ENCODE measurements at regions of chr5 and their contacts with region 1.

Region 1: GRCh38 chr5:39217365-39218281 is 1.7 kb downstream of the FYB1 start:
- DNase-seq: peak; percentile 90
- ATAC-seq: peak; percentile 71
- H3K4me3 Mint-ChIP-seq: peak overlapping the region; percentile 81
- H3K27ac Mint-ChIP-seq: peak overlapping the region; percentile 95
- H3K4me1 Mint-ChIP-seq: peaks cover 62% of the 10 kb centered on the region
- H3K27me3 Mint-ChIP-seq: no peaks in the 10 kb centered on the region
- CTCF ChIP-seq: peak; percentile 91

Region 2: DNA sequence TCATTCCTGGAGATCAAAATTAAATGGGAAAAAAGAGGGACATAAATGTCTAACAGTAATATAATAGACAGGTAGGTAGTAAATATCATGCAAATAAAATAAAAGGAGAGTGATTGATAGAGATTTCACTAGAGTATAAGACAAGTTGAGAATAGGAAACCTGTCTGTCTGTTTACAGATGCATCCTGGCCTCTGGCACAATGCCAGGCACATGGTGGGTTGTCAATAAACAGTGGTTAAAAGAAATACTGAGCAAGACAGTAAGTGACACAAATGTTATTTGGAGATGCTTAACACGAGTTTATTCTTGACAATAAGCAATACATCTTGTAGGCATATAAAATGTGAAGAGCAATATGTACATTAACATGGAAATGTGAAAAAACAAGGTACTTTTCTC is 176.7 kb before region 1 on chr5:
- CTCF ChIA-PET with region 1: no interaction called
- POLR2A ChIA-PET with region 1: no interaction called
- intact Hi-C with region 1: no loop called
- DNase-seq: peak; percentile 11
- ATAC-seq: no peak
- H3K4me3 Mint-ChIP-seq: no peak overlapping the region
- H3K27ac Mint-ChIP-seq: no peak overlapping the region
- H3K4me1 Mint-ChIP-seq: peaks cover 26% of the 10 kb centered on the region
- H3K27me3 Mint-ChIP-seq: no peaks in the 10 kb centered on the region
- CTCF ChIP-seq: no peak

Region 3: DNA sequence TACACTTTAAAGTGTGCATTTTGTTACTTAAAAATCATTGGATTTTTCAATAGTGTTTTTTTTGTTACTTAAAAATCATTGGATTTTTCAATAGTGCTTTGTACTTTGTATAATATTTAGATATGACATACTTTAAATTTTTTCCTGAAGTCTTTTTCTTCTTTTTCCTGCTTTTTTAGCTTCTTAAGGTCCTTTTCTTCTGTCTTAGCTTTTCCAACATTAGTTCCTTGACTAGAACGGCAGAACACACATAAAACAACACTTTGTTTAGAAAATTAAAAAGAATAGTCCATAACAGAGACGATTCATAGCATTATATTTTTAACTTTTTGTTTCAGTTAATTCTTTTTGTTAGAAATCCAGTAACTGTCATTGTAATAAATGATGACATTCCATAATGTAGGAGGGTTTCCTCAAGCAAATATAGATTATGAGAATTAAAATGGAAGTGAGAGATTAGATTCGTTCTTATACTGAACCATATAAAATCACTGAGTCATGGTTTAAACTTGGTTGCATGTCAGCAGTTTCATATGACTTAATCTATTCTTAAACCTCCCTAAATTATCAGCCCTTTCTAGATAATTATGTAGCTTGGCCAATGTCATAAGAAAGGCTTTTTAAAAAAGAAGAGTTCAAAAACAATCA is 98.1 kb before region 1 on chr5:
- CTCF ChIA-PET with region 1: interaction called, 12 read pairs
- POLR2A ChIA-PET with region 1: interaction called, 3 read pairs
- intact Hi-C with region 1: no loop called
- DNase-seq: no peak
- ATAC-seq: no peak
- H3K4me3 Mint-ChIP-seq: no peak overlapping the region
- H3K27ac Mint-ChIP-seq: peak overlapping the region; percentile 30
- H3K4me1 Mint-ChIP-seq: peaks cover 55% of the 10 kb centered on the region
- H3K27me3 Mint-ChIP-seq: no peaks in the 10 kb centered on the region
- CTCF ChIP-seq: no peak

Region 4: DNA sequence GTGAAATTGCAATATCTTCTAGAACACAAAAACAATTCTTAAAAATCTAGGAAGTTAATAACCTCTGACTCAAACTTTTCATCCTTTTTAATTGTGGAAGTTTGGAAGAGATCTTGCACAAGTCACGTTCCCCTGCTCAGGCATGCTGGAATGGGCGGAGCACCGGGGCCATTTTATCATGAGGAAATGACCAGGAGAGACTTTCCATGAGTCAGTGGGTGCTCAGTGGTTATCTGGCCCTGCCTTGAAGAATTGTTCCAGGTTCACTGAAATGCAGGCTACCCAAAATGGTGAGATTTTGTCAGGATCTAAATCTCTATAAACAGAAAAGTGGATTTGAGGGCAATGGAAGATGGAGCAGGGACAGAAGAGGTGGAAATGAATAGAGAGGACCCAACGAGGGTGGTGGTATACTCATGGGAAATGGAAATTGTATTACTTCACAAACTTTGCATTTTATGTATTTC is 59.5 kb before region 1 on chr5:
- CTCF ChIA-PET with region 1: interaction called, 31 read pairs
- POLR2A ChIA-PET with region 1: interaction called, 3 read pairs
- intact Hi-C with region 1: no loop called
- DNase-seq: no peak
- ATAC-seq: no peak
- H3K4me3 Mint-ChIP-seq: peak overlapping the region; percentile 24
- H3K27ac Mint-ChIP-seq: peak overlapping the region; percentile 66
- H3K4me1 Mint-ChIP-seq: peaks cover 80% of the 10 kb centered on the region
- H3K27me3 Mint-ChIP-seq: no peaks in the 10 kb centered on the region
- CTCF ChIP-seq: no peak

Region 5: GRCh38 chr5:39187831-39188731 is 29.5 kb before region 1 on chr5:
- CTCF ChIA-PET with region 1: interaction called, 32 read pairs
- POLR2A ChIA-PET with region 1: interaction called, 9 read pairs
- intact Hi-C with region 1: no loop called
- DNase-seq: peak; percentile 51
- ATAC-seq: peak; percentile 44
- H3K4me3 Mint-ChIP-seq: peak overlapping the region; percentile 72
- H3K27ac Mint-ChIP-seq: peak overlapping the region; percentile 96
- H3K4me1 Mint-ChIP-seq: peaks cover 84% of the 10 kb centered on the region
- H3K27me3 Mint-ChIP-seq: no peaks in the 10 kb centered on the region
- CTCF ChIP-seq: no peak

Region 6: DNA sequence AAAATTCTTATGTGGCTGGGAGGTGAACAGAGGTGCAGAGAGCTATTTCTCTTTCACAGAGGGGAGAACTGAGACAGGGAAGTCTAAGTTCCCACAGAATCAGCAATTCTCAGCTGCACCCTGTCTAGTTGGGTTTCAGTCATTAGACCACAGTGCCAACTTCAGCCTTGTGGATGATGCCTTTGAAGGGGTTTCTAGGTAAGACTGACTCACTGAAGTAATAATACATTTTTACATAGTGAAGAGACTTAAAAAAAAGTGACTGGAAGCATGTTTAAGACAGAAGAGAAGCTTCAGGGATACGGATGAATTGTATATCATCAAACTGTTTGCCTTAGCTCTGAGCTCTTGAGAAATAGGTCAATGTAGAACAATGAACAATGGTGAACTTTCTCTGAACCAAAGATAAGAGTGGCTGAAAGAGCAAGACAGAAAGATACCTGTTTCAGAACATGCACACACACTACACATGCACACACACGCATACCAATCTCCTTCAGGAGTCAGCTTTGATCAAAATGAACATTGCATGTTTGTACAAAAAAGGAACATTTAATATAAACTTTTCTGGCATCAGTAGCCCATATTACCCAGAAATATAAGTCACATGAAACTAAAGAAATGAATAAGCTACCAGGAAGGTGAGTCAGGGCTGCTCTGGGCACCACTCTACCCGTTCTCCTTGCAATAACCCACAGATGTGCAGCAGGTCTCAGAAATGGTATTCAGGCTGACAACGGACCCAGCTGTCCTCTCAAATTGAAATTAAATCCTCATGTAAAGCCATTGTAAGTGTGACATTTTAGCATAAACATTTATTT is 14.3 kb after region 1 on chr5:
- CTCF ChIA-PET with region 1: interaction called, 102 read pairs
- POLR2A ChIA-PET with region 1: interaction called, 13 read pairs
- intact Hi-C with region 1: no loop called
- DNase-seq: peak; percentile 81
- ATAC-seq: peak; percentile 95
- H3K4me3 Mint-ChIP-seq: peak overlapping the region; percentile 52
- H3K27ac Mint-ChIP-seq: peak overlapping the region; percentile 92
- H3K4me1 Mint-ChIP-seq: peaks cover 21% of the 10 kb centered on the region
- H3K27me3 Mint-ChIP-seq: no peaks in the 10 kb centered on the region
- CTCF ChIP-seq: no peak

Region 7: DNA sequence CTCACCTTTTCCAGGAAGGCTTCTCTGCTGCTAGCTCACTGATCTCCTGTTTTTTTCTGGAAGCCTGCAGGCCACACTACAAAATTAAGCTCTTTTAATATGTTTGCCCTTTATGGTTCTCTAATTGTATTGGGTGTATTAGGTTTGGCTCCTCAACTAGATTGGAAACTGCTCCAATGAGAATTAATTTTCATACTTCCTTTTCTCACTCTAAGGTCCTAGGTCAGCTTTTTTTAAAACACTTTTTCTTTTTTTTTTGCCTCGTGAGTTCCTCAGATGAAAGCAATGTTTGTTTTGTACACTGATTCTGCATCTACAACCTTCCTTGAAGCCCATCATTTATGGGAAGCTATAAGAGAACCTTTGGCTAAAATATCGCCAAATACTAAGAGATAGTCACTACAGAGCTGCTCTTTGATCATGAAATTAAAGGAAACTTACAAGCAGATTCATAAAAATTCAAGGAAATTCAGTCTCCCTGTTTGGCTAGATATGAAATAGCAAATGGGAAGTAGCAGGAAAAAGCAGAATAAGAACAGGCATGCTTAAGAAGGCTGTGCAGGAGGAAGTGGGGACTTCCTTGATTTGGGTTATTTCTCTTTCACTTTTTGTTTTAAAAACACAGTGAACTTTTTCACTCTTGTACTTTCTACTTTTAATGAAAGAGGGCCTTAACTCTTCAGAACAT is 56.9 kb after region 1 on chr5:
- CTCF ChIA-PET with region 1: interaction called, 317 read pairs
- POLR2A ChIA-PET with region 1: interaction called, 21 read pairs
- intact Hi-C with region 1: no loop called
- DNase-seq: no peak
- ATAC-seq: peak; percentile 59
- H3K4me3 Mint-ChIP-seq: peak overlapping the region; percentile 79
- H3K27ac Mint-ChIP-seq: peak overlapping the region; percentile 99
- H3K4me1 Mint-ChIP-seq: peaks cover 49% of the 10 kb centered on the region
- H3K27me3 Mint-ChIP-seq: no peaks in the 10 kb centered on the region
- CTCF ChIP-seq: no peak

Region 8: DNA sequence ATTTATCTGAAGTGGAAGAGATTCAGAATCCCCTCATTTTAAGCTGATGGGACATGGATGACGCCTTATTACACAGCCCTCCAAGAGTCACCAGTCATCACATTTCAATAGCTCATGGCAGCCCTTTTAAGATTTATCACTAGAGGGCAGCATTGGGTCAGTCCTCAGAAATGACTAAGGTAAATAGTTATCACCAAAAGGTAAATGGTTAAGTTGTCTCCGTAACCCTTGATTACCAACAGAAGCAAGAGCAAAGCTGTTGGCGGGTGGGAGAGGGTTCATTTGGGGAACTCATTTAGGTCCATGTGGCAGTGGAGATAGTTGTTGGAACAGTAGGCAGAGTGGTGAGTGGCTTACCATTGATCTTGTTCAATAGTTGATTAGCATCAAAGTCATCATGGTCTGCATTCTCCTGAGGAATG is 158.7 kb after region 1 on chr5:
- CTCF ChIA-PET with region 1: interaction called, 32 read pairs
- POLR2A ChIA-PET with region 1: no interaction called
- intact Hi-C with region 1: no loop called
- DNase-seq: peak; percentile 64
- ATAC-seq: peak; percentile 72
- H3K4me3 Mint-ChIP-seq: no peak overlapping the region
- H3K27ac Mint-ChIP-seq: no peak overlapping the region
- H3K4me1 Mint-ChIP-seq: no peaks in the 10 kb centered on the region
- H3K27me3 Mint-ChIP-seq: peaks cover 3% of the 10 kb centered on the region
- CTCF ChIP-seq: peak; percentile 74

Measured in activated CD8-positive, alpha-beta T cell treated with anti-CD3 and anti-CD28 coated beads for 36 hours (primary cell).